ENCODE measurements at regions of chr17 and their contacts with region 1.

Region 1: GRCh38 chr17:79065105-79065670 is 9.4 kb upstream of the ENGASE start:
- DNase-seq: peak; percentile 77

Region 2: GRCh38 chr17:78925234-78925633 is 140.0 kb before region 1 on chr17 and contains the start of gene TIMP2:
- intact Hi-C with region 1: no loop called
- DNase-seq: peak; percentile 97
- total RNA-seq, gene TIMP2: 484 to 701 TPM

Region 3: GRCh38 chr17:79095345-79096055 is 30.3 kb after region 1 on chr17:
- intact Hi-C with region 1: no loop called
- DNase-seq: no peak

Region 4: DNA sequence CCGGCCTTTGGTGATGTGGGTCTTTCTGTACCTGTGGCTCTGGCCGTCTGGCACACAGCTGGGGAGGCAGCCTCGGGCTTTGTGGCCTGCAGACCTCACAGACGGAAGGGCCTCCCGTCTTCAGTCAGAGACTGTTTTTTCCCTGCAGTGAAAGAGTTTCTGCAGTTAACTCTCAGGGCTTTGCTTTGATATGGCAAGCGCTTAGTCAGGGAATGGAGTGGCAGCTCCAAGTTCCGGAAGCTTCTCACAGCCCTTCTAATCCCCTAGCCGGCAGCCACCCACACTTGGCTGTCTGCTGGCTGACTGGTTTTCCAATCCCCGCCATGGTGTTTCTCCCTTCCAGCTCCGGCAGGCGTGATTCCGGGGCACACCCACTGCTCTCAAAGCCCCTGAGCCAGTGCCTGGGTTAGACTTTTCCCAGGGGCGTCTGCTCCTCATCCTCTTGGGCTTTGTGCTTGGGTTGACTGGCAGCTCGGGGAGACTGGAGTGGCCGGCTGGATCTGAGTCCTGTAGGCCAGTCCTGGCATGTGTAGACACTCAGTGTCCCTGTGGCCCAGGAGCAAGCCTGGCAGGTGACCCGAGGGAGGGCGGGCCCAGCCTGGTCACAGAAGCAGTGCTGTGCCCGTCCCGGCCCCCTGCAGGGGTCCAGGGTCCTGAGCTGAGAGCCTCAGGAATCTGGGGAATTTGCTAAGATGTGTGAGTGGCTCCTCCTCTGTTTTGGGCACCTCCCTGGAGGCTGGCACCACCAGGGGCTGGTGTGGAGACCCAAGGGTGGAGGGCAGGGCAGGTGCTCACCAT is 1999.7 kb after region 1 on chr17:
- intact Hi-C with region 1: loop called in 1 of 2 experiments (anchors 5 kb)
- DNase-seq: no peak

Measured in posterior vena cava (tissue), 2 donors.